ENCODE measurements at regions of chr14 and their contacts with region 1.

Region 1: GRCh38 chr14:60164712-60165546 is at the start of gene DHRS7:
- DNase-seq: peak; percentile 81 to 90 (median 89)
- H3K4me3 ChIP-seq: peak within 1 kb of the TSS; percentile 62 to 90 (median 84)
- H3K27ac ChIP-seq: peak within 1 kb of the TSS; percentile 75 to 93 (median 88)
- H3K4me1 ChIP-seq: peaks cover 8 to 31% of the 10 kb centered on the region in 2 donors
- H3K27me3 ChIP-seq: no peaks in the 10 kb centered on the region
- CTCF ChIP-seq: peak in 5 of 6 experiments; percentile 9 to 70 (median 58)
- POLR2A ChIP-seq: peak; percentile 78 to 89
- total RNA-seq, gene DHRS7: 92.8 to 248 (median 168) TPM

Region 2: DNA sequence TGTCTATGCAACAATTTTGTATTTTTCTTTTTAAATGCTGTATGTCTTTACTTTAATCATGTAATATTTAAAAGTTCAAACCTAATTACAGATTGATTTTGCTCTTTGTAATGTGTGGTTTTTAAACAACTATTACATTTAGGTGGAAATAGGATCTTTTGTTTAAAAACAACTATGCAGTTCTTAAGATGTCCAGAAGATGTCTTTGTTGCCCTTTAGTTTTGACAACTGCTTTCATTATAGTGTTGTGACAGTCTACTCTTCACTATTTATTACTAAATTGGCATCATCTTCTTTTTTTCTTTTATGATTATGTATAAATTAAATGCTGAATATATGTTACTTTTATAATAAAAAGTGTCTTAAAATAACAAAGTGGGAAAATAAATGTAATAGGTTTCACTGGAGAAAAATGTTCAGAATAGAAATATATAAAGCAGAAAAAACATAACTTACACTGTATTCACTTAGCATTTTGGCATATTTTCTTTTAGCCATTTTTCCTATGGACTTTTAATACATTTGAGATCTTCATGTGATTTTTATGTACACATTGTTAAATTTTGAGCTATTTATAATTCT is 100.3 kb before region 1 on chr14:
- intact Hi-C with region 1: loop called in 1 of 2 experiments (anchors 5 kb)
- DNase-seq: no peak
- H3K4me3 ChIP-seq: no peak overlapping the region
- H3K27ac ChIP-seq: no peak overlapping the region
- H3K4me1 ChIP-seq: no peaks in the 10 kb centered on the region
- H3K27me3 ChIP-seq: no peaks in the 10 kb centered on the region
- CTCF ChIP-seq: peak; percentile 52 to 83 (median 68)
- POLR2A ChIP-seq: no peak

Region 3: GRCh38 chr14:60091550-60092530 is 73.1 kb before region 1 on chr14 and contains the start of gene PCNX4:
- intact Hi-C with region 1: loop called in 1 of 2 experiments (anchors 10 kb)
- DNase-seq: peak; percentile 97 to 99 (median 98)
- H3K4me3 ChIP-seq: peak within 1 kb of the TSS; percentile 19 to 69 (median 62)
- H3K27ac ChIP-seq: peak within 1 kb of the TSS; percentile 96 to 99 (median 97)
- H3K4me1 ChIP-seq: peaks cover 17 to 31% of the 10 kb centered on the region in 2 donors
- H3K27me3 ChIP-seq: no peaks in the 10 kb centered on the region
- CTCF ChIP-seq: no peak
- POLR2A ChIP-seq: peak; percentile 92 to 97
- total RNA-seq, gene PCNX4: 31.1 to 204 (median 58.9) TPM